Mammary epithelial cell (primary cell): ENCODE measurements at regions of chr5 and their contacts with region 1.

Region 1: GRCh38 chr5:141701360-141702119 is 19.5 kb upstream of the ARAP3 start:
- DNase-seq: no peak
- H3K4me3 ChIP-seq: no peak overlapping the region
- H3K27ac ChIP-seq: no peak overlapping the region
- H3K4me1 ChIP-seq: peaks cover 9% of the 10 kb centered on the region
- H3K27me3 ChIP-seq: peaks cover 5% of the 10 kb centered on the region
- CTCF ChIP-seq: no peak

Region 2: GRCh38 chr5:141590127-141590526 is 111.4 kb before region 1 on chr5:
- CTCF ChIA-PET with region 1: no interaction called
- dilution Hi-C with region 1: no loop called
- in situ Hi-C with region 1: no loop called
- intact Hi-C with region 1: no loop called
- DNase-seq: no peak
- H3K4me3 ChIP-seq: no peak overlapping the region
- H3K27ac ChIP-seq: no peak overlapping the region
- H3K4me1 ChIP-seq: no peaks in the 10 kb centered on the region
- H3K27me3 ChIP-seq: no peaks in the 10 kb centered on the region
- CTCF ChIP-seq: no peak

Region 3: DNA sequence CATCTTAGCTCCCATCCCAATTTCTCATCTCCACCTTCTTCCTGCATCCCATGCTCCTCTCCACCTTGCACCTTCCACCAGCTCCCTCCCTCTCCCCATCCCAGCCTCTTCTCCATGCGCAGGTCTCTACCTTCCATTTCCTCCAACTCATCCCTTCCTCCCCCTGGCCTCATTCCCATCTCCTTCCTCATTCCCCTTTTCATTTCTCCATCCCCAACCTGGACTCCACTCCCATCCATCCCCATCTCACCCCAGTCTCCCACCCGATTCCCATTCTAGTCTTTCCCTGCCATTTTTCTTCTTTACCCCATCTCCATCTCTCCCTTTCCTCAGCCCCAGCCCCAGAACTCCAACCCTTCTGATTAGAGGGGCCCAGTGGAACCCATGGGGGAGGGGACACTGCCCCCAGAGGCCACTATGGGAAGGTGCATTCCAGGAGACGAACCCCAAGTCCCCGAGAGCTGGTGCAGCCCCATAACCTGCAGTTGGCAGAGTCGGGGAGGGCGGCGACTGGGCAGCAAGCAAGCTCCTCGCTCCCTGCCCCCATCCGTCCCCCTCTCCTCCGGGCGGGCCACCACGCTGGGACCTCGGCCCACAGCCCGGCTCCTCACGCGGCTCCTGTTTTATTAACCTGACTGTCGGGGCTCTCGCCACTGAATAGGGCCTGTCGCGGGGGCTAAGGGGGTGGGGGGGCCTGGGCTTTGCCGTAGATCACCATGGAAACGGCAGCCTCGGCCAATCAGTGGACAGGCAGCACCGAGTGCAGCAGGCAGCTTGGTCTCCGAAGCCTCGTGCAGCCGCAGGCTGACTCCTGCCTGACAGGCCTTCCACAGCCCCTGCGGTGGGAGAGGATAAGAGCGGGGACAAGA is 110.0 kb after region 1 on chr5:
- CTCF ChIA-PET with region 1: interaction called, 3 read pairs
- dilution Hi-C with region 1: no loop called
- in situ Hi-C with region 1: loop called in 1 of 2 experiments (anchors 10 kb)
- intact Hi-C with region 1: loop called (anchors 1 kb)
- DNase-seq: no peak
- H3K4me3 ChIP-seq: no peak overlapping the region
- H3K27ac ChIP-seq: no peak overlapping the region
- H3K4me1 ChIP-seq: no peaks in the 10 kb centered on the region
- H3K27me3 ChIP-seq: no peaks in the 10 kb centered on the region
- CTCF ChIP-seq: peak; percentile 55 to 67

Region 4: DNA sequence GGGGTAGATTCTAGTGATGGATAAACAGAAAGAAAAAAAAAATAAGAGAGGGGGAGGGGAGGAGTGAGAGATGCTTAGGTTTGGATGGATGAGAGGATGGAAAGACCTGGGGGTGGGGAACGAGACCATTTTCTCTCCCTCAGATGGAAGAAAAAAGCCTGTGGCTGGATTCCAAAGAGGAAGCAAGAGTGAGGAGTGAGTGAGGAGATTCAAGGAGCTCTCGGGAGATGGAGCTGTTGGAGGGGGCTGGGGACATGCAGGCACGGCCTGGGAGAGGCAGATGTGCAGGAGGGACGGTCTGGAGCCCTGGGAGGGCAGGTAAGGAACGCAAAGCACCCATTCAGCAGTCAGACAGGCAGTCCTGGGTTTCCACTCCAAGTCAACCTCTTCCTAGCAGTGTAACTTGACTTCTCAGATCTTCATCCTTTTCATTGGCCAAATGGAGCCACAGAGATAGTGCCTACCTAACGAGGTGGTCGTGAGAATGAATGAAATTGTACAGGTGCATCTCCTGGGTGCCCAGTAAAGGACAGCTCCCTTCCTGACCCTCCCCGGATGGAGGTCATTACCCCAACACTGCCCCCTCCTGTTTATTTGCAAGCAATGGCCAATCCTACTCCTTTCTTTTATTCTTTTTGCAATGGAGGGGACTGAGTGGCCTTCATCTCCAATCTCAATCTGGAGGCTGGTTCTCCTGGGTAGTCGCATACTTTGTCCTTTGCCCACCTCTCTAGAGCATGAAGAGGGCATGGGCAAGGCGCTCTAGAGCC is 124.4 kb after region 1 on chr5:
- CTCF ChIA-PET with region 1: no interaction called
- dilution Hi-C with region 1: no loop called
- in situ Hi-C with region 1: loop called in 1 of 2 experiments (anchors 10 kb)
- intact Hi-C with region 1: no loop called
- DNase-seq: no peak
- H3K4me3 ChIP-seq: no peak overlapping the region
- H3K27ac ChIP-seq: no peak overlapping the region
- H3K4me1 ChIP-seq: peaks cover 4% of the 10 kb centered on the region
- H3K27me3 ChIP-seq: no peaks in the 10 kb centered on the region
- CTCF ChIP-seq: peak; percentile 36 to 38